K562 (cell line): ENCODE measurements at regions of chr7 and their contacts with region 1.

Region 1: GRCh38 chr7:130069978-130070860 is at the start of gene KLHDC10:
- DNase-seq: peak; percentile 99 to 100 (median 100)
- ATAC-seq: peak; percentile 94
- H3K4me3 ChIP-seq: peak within 1 kb of the TSS; percentile 60
- H3K27ac ChIP-seq: peak within 1 kb of the TSS; percentile 78
- H3K4me1 ChIP-seq: peaks cover 11 to 20% of the 10 kb centered on the region in 2 experiments
- H3K27me3 ChIP-seq: no peaks in the 10 kb centered on the region
- CTCF ChIP-seq: 0 out of 6 replicates have a peak, but pooled peaks of 1 of the 3 experiments have one; percentile 1
- EP300 ChIP-seq: peak; percentile 65
- POLR2A ChIP-seq: peak; percentile 91
- RAD21 ChIP-seq: 0 out of 4 replicates have a peak, but pooled peaks of 1 of the 2 experiments have one; percentile 17
- polyA plus RNA-seq, gene KLHDC10: 9.8 to 11.3 TPM

Region 2: GRCh38 chr7:130135208-130136205 is 65.3 kb after region 1 on chr7:
- CTCF ChIA-PET with region 1: no interaction called
- POLR2A ChIA-PET with region 1: no interaction called
- in situ Hi-C with region 1: no loop called
- intact Hi-C with region 1: loop called (anchors 1 kb)
- DNase-seq: peak; percentile 92 to 98 (median 95)
- ATAC-seq: peak; percentile 87
- H3K4me3 ChIP-seq: no peak overlapping the region
- H3K27ac ChIP-seq: peak overlapping the region; percentile 89
- H3K4me1 ChIP-seq: peaks cover 38 to 73% of the 10 kb centered on the region in 2 experiments
- H3K27me3 ChIP-seq: no peaks in the 10 kb centered on the region
- CTCF ChIP-seq: 0 out of 6 replicates have a peak, but pooled peaks of 1 of the 3 experiments have one; percentile 5
- EP300 ChIP-seq: peak; percentile 98
- POLR2A ChIP-seq: no peak; the same call in 1 of the 2 replicates
- RAD21 ChIP-seq: peak; percentile 20 to 50; a peak in 3 of 4 replicates

Region 3: GRCh38 chr7:130242198-130243014 is 172.2 kb after region 1 on chr7:
- CTCF ChIA-PET with region 1: interaction called, 3 read pairs
- POLR2A ChIA-PET with region 1: interaction called, 3 read pairs
- in situ Hi-C with region 1: no loop called
- intact Hi-C with region 1: loop called (anchors 1 kb)
- DNase-seq: peak; percentile 66 to 81 (median 76)
- ATAC-seq: peak; percentile 100
- H3K4me3 ChIP-seq: no peak overlapping the region
- H3K27ac ChIP-seq: no peak overlapping the region
- H3K4me1 ChIP-seq: peaks cover 0 to 10% of the 10 kb centered on the region in 2 experiments; a peak in 2 of 5 replicates
- H3K27me3 ChIP-seq: 0 out of 5 replicates have a peak, but pooled peaks cover 0 to 3% of the 10 kb centered on the region in 2 experiments
- CTCF ChIP-seq: peak; percentile 94 to 97 (median 96)
- EP300 ChIP-seq: peak; percentile 48; the same call in 1 of the 2 replicates
- POLR2A ChIP-seq: no peak
- RAD21 ChIP-seq: peak; percentile 73 to 96

Region 4: GRCh38 chr7:130365511-130366441 is 295.6 kb after region 1 on chr7:
- CTCF ChIA-PET with region 1: no interaction called
- POLR2A ChIA-PET with region 1: no interaction called
- in situ Hi-C with region 1: no loop called
- intact Hi-C with region 1: loop called (anchors 10 kb)
- DNase-seq: no peak
- ATAC-seq: no peak
- H3K4me3 ChIP-seq: no peak overlapping the region
- H3K27ac ChIP-seq: no peak overlapping the region
- H3K4me1 ChIP-seq: no peaks in the 10 kb centered on the region; a peak in 3 of 5 replicates
- H3K27me3 ChIP-seq: peaks cover 15 to 38% of the 10 kb centered on the region in 2 experiments
- CTCF ChIP-seq: no peak
- EP300 ChIP-seq: no peak
- POLR2A ChIP-seq: no peak
- RAD21 ChIP-seq: no peak

Region 5: DNA sequence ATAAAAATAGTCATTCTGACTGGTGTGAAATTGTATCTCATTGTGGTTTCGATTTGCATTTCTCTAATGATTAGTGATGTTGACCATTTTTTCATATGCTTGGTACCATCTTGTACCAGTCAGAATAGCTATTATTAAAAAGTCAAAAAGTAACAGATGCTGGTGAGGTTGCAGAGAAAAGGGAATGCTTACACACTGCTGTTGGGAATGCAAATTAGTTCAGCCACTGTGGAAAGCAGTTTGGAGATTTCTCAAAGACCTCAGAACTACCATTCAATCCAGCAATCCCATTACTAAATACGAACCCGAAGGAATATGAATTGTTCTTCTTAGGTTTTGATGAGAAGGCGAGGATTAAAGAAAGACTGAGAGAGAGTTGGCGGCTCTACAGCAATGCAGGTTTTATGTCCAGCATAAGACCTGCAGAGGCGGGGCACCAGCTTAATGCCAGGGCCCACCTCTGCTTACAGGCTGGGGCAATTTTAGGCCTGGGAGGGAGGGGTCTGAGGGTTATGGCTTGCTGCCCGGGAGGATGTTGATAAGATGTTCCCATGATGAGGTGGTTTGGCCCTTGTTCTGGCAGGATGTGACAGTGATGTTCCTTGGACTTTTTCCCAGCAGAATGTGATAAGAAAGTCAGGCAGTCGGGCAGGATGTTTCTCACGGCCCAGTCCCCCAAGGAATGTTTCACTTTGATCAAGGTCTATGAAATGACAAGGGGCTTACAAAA is 496.1 kb after region 1 on chr7:
- CTCF ChIA-PET with region 1: no interaction called
- POLR2A ChIA-PET with region 1: no interaction called
- in situ Hi-C with region 1: loop called (anchors 10 kb)
- intact Hi-C with region 1: loop called (anchors 1 kb)
- DNase-seq: peak in 2 of 4 experiments; percentile 5 to 13
- ATAC-seq: no peak
- H3K4me3 ChIP-seq: no peak overlapping the region
- H3K27ac ChIP-seq: no peak overlapping the region
- H3K4me1 ChIP-seq: peaks cover 0 to 3% of the 10 kb centered on the region in 2 experiments; a peak in 1 of 5 replicates
- H3K27me3 ChIP-seq: no peaks in the 10 kb centered on the region
- CTCF ChIP-seq: no peak
- EP300 ChIP-seq: no peak
- POLR2A ChIP-seq: no peak
- RAD21 ChIP-seq: no peak

Region 6: GRCh38 chr7:130758429-130759056 is 688.3 kb after region 1 on chr7:
- CTCF ChIA-PET with region 1: interaction called, 27 read pairs
- POLR2A ChIA-PET with region 1: interaction called, 5 read pairs
- in situ Hi-C with region 1: loop called (anchors 10 kb)
- intact Hi-C with region 1: loop called (anchors 1 kb)
- DNase-seq: peak; percentile 60 to 73 (median 64)
- ATAC-seq: peak; percentile 75
- H3K4me3 ChIP-seq: no peak overlapping the region
- H3K27ac ChIP-seq: no peak overlapping the region
- H3K4me1 ChIP-seq: no peaks in the 10 kb centered on the region
- H3K27me3 ChIP-seq: peaks cover 8 to 18% of the 10 kb centered on the region in 2 experiments
- CTCF ChIP-seq: peak in 2 of 3 experiments; percentile 65 to 95; a peak in 4 of 6 replicates
- EP300 ChIP-seq: no peak
- POLR2A ChIP-seq: no peak
- RAD21 ChIP-seq: peak; percentile 83 to 90